ENCODE measurements at regions of chr17 and their contacts with region 1.

Region 1: GRCh38 chr17:8532021-8532420 is 96.3 kb downstream of the NDEL1 start:
- DNase-seq: peak; percentile 75 to 82
- H3K4me3 ChIP-seq: no peak overlapping the region
- H3K4me3 Mint-ChIP-seq: no peak overlapping the region
- H3K27ac Mint-ChIP-seq: no peak overlapping the region
- H3K4me1 ChIP-seq: peaks cover 12% of the 10 kb centered on the region
- H3K4me1 Mint-ChIP-seq: no peaks in the 10 kb centered on the region
- H3K27me3 ChIP-seq: no peaks in the 10 kb centered on the region
- H3K27me3 Mint-ChIP-seq: no peaks in the 10 kb centered on the region
- CTCF ChIP-seq: no peak

Region 2: DNA sequence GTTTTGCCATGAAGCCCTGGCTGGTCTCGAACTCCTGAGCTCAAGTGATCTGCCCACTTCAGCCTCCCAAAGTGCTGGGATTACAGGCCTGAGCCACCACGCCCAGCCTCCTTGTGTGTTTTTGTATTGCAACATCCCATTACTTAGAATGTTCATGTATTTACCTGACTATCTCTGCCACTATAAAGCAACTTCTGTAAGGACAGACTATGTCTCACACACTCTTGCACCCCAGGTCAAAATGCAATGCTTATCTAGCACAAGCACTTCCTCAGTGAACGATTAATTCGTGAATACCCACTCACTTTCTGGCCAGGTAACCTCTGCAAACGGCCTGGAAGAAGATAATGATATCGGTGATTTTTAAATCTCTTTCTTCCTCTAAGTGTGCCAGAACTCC is 13.7 kb before region 1 on chr17:
- CTCF ChIA-PET with region 1: interaction called, 3 read pairs
- POLR2A ChIA-PET with region 1: no interaction called
- intact Hi-C with region 1: loop called (anchors 1 kb)
- DNase-seq: peak; percentile 18 to 43
- H3K4me3 ChIP-seq: no peak overlapping the region
- H3K4me3 Mint-ChIP-seq: no peak overlapping the region
- H3K27ac Mint-ChIP-seq: no peak overlapping the region
- H3K4me1 ChIP-seq: peaks cover 8% of the 10 kb centered on the region; the same call in 1 of the 2 replicates
- H3K4me1 Mint-ChIP-seq: no peaks in the 10 kb centered on the region
- H3K27me3 ChIP-seq: no peaks in the 10 kb centered on the region
- H3K27me3 Mint-ChIP-seq: no peaks in the 10 kb centered on the region
- CTCF ChIP-seq: no peak

Region 3: GRCh38 chr17:8651013-8651412 is 119.0 kb after region 1 on chr17:
- CTCF ChIA-PET with region 1: no interaction called
- POLR2A ChIA-PET with region 1: interaction called, 10 read pairs
- intact Hi-C with region 1: no loop called
- DNase-seq: no peak
- H3K4me3 ChIP-seq: no peak overlapping the region
- H3K4me3 Mint-ChIP-seq: no peak overlapping the region
- H3K27ac Mint-ChIP-seq: no peak overlapping the region
- H3K4me1 ChIP-seq: no peaks in the 10 kb centered on the region
- H3K4me1 Mint-ChIP-seq: no peaks in the 10 kb centered on the region
- H3K27me3 ChIP-seq: no peaks in the 10 kb centered on the region
- H3K27me3 Mint-ChIP-seq: peaks cover 4% of the 10 kb centered on the region
- CTCF ChIP-seq: peak in 1 of 2 experiments; percentile 15

Measured in Caco-2 (cell line).